IMR-90 (cell line): ENCODE measurements at regions of chr20 and their contacts with region 1.

Region 1: GRCh38 chr20:45823949-45824835 is 2.9 kb downstream of the TNNC2 start:
- DNase-seq: no peak
- ATAC-seq: peak; percentile 29
- H3K4me3 ChIP-seq: no peak overlapping the region
- H3K27ac ChIP-seq: no peak overlapping the region
- H3K4me1 ChIP-seq: peaks cover 18% of the 10 kb centered on the region
- H3K27me3 ChIP-seq: peaks cover 2% of the 10 kb centered on the region; the same call in 1 of the 2 replicates
- CTCF ChIP-seq: peak; percentile 40
- POLR2A ChIP-seq: no peak
- RAD21 ChIP-seq: peak; percentile 49

Region 2: DNA sequence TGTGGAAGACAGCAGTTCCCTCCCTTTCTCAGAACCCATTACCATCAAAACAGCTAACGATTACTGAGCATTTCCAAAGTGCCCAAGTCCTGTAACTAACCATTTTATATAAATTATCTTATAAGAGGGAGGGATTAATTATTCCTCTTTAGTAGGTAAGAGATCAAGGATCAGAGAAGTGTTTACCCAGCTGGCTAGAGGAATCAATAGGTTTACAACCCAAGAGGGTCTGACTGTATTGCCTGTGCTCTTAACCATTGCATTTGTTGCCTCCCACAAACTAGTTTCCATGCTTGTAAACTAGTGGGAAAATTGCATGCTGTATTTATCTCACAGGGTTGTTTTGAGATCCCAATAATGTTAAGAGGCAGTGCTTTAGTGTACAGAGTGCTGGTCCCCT is 419.8 kb before region 1 on chr20:
- CTCF ChIA-PET with region 1: no interaction called
- POLR2A ChIA-PET with region 1: interaction called, 13 read pairs
- dilution Hi-C with region 1: no loop called
- in situ Hi-C with region 1: no loop called
- intact Hi-C with region 1: no loop called
- DNase-seq: no peak
- ATAC-seq: no peak
- H3K4me3 ChIP-seq: no peak overlapping the region
- H3K27ac ChIP-seq: no peak overlapping the region
- H3K4me1 ChIP-seq: peaks cover 4% of the 10 kb centered on the region; the same call in 1 of the 2 replicates
- H3K27me3 ChIP-seq: no peaks in the 10 kb centered on the region
- CTCF ChIP-seq: no peak
- POLR2A ChIP-seq: no peak
- RAD21 ChIP-seq: no peak

Region 3: GRCh38 chr20:45890985-45891983 is 67.1 kb after region 1 on chr20 and contains the starts of genes CTSA and NEURL2:
- CTCF ChIA-PET with region 1: no interaction called
- POLR2A ChIA-PET with region 1: no interaction called
- dilution Hi-C with region 1: no loop called
- in situ Hi-C with region 1: no loop called
- intact Hi-C with region 1: loop called (anchors 2 kb)
- DNase-seq: peak; percentile 92
- ATAC-seq: peak; percentile 73
- H3K4me3 ChIP-seq: peak within 1 kb of the TSS; percentile 74
- H3K27ac ChIP-seq: peak within 1 kb of the TSS; percentile 63
- H3K4me1 ChIP-seq: peaks cover 3% of the 10 kb centered on the region; the same call in 1 of the 2 replicates
- H3K27me3 ChIP-seq: no peaks in the 10 kb centered on the region
- CTCF ChIP-seq: no peak
- POLR2A ChIP-seq: no peak; the same call in none of the 2 replicates
- RAD21 ChIP-seq: no peak
- total RNA-seq, gene CTSA: 19.0 and 30.3 TPM in 2 replicates
- total RNA-seq, gene NEURL2: 0.56 and 1.1 TPM in 2 replicates